A549 (cell line): ENCODE measurements at regions of chr1 and their contacts with region 1.

Region 1: DNA sequence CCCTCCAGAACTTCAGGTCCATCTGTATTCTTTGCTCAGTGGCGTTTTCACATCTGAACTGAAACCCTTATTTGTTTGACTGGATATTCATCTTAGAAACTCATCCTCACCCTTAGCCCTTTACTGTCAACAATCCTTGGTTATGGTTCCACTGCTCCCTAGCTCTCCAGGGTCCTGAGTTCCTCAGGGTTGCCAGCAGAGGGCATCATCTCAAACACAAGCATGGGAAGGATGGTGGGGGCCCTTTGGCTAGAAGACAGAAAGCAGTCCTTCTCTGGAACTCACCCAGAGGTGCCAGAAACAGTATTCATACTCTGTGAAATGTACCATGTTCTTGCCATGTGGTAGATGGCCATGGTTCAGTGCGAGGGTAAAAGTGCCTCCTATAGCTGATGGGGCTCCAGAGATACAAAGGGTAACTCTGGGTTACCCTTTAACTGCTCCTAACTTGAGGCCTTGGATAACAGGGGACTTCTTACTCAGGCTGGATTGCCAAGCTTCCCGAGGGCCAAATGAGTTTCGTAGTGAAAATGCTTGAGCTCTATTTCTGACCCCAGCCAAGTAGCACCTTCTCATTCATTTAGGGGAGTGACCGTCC is 11.3 kb downstream of the NCSTN start:
- DNase-seq: peak; percentile 30 to 48
- ATAC-seq: peak; percentile 65 to 88; a peak in 4 of 6 replicates
- H3K4me3 ChIP-seq: no peak overlapping the region
- H3K27ac ChIP-seq: no peak overlapping the region
- H3K4me1 ChIP-seq: no peaks in the 10 kb centered on the region
- CTCF ChIP-seq: peak; percentile 43
- EP300 ChIP-seq: no peak
- POLR2A ChIP-seq: no peak
- RAD21 ChIP-seq: no peak

Region 2: GRCh38 chr1:160282807-160283206 is 71.7 kb before region 1 on chr1:
- CTCF ChIA-PET with region 1: no interaction called
- POLR2A ChIA-PET with region 1: no interaction called
- DNase-seq: no peak
- ATAC-seq: no peak
- H3K4me3 ChIP-seq: no peak overlapping the region
- H3K27ac ChIP-seq: no peak overlapping the region
- H3K4me1 ChIP-seq: peaks cover 6% of the 10 kb centered on the region
- CTCF ChIP-seq: no peak
- EP300 ChIP-seq: no peak
- POLR2A ChIP-seq: no peak
- RAD21 ChIP-seq: no peak

Region 3: GRCh38 chr1:160342953-160343869 is 11.3 kb before region 1 on chr1 and contains the starts of genes COPA and NCSTN:
- CTCF ChIA-PET with region 1: interaction called, 11 read pairs
- POLR2A ChIA-PET with region 1: interaction called, 3 read pairs
- DNase-seq: peak; percentile 90 to 96
- ATAC-seq: peak; percentile 99 to 100
- H3K4me3 ChIP-seq: peak within 1 kb of the TSS; percentile 93
- H3K27ac ChIP-seq: peak within 1 kb of the TSS; percentile 92 to 93
- H3K4me1 ChIP-seq: peaks cover 20% of the 10 kb centered on the region
- CTCF ChIP-seq: no peak
- EP300 ChIP-seq: no peak
- POLR2A ChIP-seq: peak; percentile 76
- RAD21 ChIP-seq: no peak
- polyA plus RNA-seq, gene COPA: 149 and 188 TPM in 2 replicates
- polyA plus RNA-seq, gene NCSTN: 90.4 and 91.6 TPM in 2 replicates

Region 4: GRCh38 chr1:160400223-160400645 is 45.7 kb after region 1 on chr1 and contains the start of gene VANGL2:
- CTCF ChIA-PET with region 1: no interaction called
- POLR2A ChIA-PET with region 1: no interaction called
- DNase-seq: peak; percentile 62 to 69
- ATAC-seq: peak; percentile 51 to 75; a peak in 3 of 6 replicates
- H3K4me3 ChIP-seq: peak within 1 kb of the TSS; percentile 75
- H3K27ac ChIP-seq: peak within 1 kb of the TSS; percentile 80 to 90
- H3K4me1 ChIP-seq: peaks cover 18% of the 10 kb centered on the region; the same call in 2 of the 3 replicates
- CTCF ChIP-seq: no peak
- EP300 ChIP-seq: no peak
- POLR2A ChIP-seq: no peak
- RAD21 ChIP-seq: no peak
- polyA plus RNA-seq, gene VANGL2: 3.9 and 4.5 TPM in 2 replicates

Region 5: GRCh38 chr1:160416369-160416768 is 61.9 kb after region 1 on chr1:
- CTCF ChIA-PET with region 1: interaction called, 13 read pairs
- POLR2A ChIA-PET with region 1: no interaction called
- DNase-seq: peak; percentile 55 to 59
- ATAC-seq: peak; percentile 92 to 97
- H3K4me3 ChIP-seq: no peak overlapping the region
- H3K27ac ChIP-seq: no peak overlapping the region
- H3K4me1 ChIP-seq: no peaks in the 10 kb centered on the region
- CTCF ChIP-seq: peak; percentile 50
- EP300 ChIP-seq: no peak
- POLR2A ChIP-seq: no peak
- RAD21 ChIP-seq: peak; percentile 66 to 73

Region 6: DNA sequence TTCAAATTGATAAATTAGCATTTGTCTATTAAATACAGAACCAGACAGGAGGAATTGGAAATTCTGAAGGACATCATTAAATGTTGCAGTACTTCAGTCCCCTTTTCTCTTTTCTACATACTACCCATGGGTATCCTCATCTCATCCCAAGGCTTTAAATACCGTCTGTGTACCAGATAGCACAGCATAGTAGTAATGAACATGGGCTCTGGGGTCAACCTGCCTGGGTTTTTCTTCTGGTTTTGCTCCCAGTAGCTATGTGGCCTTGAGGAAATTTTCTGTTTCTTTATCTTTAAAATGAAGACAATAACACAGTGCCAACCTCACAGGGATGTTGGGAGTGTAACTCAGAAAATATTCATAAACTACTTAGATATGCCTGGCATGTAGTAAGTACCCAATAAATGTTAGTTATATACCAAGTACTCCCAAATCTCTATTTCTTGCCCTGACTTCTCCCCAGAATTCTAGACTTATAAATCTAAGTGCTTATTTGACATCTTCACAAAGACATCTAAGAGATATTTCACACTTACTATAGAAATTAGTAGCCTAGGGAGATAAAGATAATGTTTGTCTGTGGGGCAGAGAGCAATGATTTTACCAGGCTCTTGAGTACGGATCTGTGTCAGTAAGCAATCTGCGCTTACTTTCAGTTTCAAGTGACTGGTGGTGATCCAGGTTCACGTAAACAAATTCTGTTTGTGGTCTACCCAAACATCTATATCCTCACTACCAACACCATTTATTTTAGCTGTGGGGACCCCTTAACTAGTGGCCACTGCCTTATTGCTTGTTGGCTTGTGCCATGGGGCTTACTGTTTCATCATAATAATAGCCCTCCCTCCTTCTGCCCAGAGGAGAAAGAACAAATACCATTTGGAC is 83.2 kb after region 1 on chr1:
- CTCF ChIA-PET with region 1: no interaction called
- POLR2A ChIA-PET with region 1: no interaction called
- DNase-seq: no peak
- ATAC-seq: no peak
- H3K4me3 ChIP-seq: no peak overlapping the region
- H3K27ac ChIP-seq: no peak overlapping the region
- H3K4me1 ChIP-seq: no peaks in the 10 kb centered on the region
- CTCF ChIP-seq: no peak
- EP300 ChIP-seq: no peak
- POLR2A ChIP-seq: no peak
- RAD21 ChIP-seq: no peak